GM13977 (cell line): ENCODE measurements at regions of chr6 and their contacts with region 1.

Region 1: DNA sequence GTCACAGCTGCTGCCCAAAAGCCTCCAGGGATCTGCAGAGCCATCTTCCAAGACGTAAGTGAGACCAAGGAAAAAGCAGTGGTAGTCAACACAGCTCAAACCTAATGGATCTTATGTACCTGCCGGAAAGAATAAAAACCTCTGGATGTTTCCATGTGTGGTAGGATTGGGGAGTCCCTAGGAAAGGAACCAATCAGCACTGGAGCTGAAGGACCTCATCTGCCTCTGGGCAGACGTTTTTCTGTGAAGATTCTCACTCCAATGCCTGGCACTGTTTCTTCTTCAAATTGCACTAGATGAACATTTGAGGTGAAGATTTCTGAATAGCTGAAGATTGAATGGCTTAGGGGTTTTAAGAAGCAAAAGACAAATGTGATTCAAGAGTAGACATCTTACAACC is at the start of gene HLA-DQB2:
- DNase-seq: peak; percentile 36
- CTCF ChIP-seq: no peak

Region 2: GRCh38 chr6:31607317-31607716 is 1156.1 kb before region 1 on chr6:
- in situ Hi-C with region 1: no loop called
- DNase-seq: no peak
- CTCF ChIP-seq: no peak

Region 3: DNA sequence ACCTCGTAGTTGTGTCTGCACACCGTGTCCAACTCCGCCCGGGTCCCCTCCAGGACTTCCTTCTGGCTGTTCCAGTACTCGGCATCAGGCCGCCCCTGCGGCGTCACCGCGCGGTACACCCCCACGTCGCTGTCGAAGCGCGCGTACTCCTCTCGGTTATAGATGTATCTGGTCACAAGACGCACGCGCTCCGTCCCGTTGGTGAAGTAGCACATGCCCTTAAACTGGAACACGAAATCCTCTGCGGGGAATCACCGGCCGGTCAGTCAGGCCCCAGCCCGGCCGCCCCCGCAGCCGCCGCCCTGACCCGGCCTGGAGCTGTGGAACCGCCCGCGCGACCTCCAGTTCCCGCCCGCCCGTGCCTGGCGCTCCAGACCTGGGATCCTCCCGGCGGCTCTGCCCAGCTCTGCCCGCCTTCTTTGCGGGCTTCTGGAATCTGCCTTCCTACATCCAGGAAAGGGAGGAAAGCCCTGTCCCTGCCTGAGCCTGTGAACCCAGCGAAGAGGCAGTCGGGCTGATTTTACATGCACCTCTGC is 98.5 kb before region 1 on chr6:
- in situ Hi-C with region 1: loop called (anchors 5 kb)
- DNase-seq: no peak
- CTCF ChIP-seq: no peak